HAP-1 (cell line): ENCODE measurements at regions of chr9 and their contacts with region 1.

Region 1: GRCh38 chr9:120985810-120986222 is 59.2 kb upstream of the TRAF1 start:
- DNase-seq: peak; percentile 25 to 48
- H3K4me3 ChIP-seq: no peak overlapping the region
- H3K4me1 ChIP-seq: no peaks in the 10 kb centered on the region
- H3K27me3 ChIP-seq: peaks cover 4% of the 10 kb centered on the region; the same call in 1 of the 2 replicates

Region 2: DNA sequence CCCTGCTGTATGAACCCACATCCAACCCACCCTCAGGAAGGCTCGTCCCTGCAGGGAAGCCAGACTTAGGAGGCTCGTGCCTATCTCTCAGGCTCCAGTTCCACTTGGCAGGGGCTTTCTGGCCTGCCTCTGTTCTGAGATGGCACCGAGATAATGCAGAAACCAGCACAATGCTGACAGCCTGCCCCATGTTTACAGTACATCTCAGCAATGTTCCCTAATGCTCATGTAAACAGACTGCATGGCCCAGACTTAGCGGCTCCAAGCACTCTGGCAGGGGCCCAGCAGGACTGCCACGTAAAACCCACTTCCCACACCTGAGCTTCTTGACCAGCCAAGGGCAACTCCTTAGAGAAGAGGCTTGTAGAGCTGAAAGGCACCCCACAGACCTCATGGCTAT is 1117.1 kb before region 1 on chr9:
- in situ Hi-C with region 1: no loop called
- DNase-seq: no peak
- H3K4me3 ChIP-seq: no peak overlapping the region
- H3K4me1 ChIP-seq: no peaks in the 10 kb centered on the region
- H3K27me3 ChIP-seq: no peaks in the 10 kb centered on the region

Region 3: DNA sequence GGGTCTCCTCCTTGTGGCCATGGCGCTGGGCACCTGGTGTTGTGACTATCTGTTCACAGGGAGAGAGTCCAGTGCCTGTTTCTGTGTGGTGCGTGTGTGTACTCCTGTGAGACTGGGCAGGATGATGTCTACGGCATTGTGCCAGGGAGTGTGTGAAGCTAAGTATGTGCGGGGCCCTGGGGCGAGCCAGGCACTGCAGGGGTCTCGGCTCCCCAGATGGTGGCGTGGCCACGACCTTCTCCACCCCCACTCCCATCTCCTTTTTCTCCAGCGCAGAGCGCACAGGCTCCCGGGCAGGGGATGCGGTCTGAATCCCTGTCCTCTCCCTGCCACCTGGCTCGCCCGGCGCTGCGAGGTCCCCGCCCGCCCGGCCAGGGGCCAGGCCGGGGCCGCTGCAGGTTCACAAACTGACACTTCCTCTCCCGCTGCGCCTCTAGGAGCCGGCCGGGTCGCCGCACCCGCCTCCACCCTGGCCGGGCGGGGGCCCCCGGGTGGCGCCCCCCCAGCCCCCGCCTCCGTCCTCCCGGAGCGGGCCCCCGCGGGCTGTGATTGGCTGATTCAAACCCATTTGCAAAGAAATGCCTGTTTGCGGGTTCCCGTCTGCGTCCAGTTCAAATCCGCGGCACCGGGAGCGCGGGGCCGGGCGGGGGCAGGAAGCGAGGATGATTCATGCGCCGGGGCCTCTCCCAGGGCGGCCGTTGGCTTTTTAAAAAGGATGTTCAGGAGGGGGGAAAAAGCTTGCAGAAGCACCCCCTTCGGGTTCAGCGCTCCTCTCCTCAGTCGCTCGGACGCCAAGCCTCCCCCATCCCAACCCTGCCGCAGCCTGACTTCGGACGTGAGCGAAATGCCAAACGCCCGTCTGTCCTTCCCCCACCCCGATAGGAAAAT is 109.6 kb before region 1 on chr9:
- in situ Hi-C with region 1: no loop called
- DNase-seq: peak; percentile 72 to 91
- H3K4me3 ChIP-seq: peak overlapping the region; percentile 75
- H3K4me1 ChIP-seq: peaks cover 30% of the 10 kb centered on the region
- H3K27me3 ChIP-seq: no peaks in the 10 kb centered on the region

Region 4: GRCh38 chr9:121059998-121060636 is 74.3 kb after region 1 on chr9:
- in situ Hi-C with region 1: loop called (anchors 10 kb)
- DNase-seq: peak; percentile 62 to 65
- H3K4me3 ChIP-seq: no peak overlapping the region
- H3K4me1 ChIP-seq: peaks cover 7% of the 10 kb centered on the region
- H3K27me3 ChIP-seq: peaks cover 4% of the 10 kb centered on the region; the same call in 1 of the 2 replicates